ENCODE measurements at regions of chr1 and their contacts with region 1.

Region 1: GRCh38 chr1:221829327-221830015 is 87.6 kb upstream of the DUSP10 start:
- DNase-seq: peak; percentile 79
- ATAC-seq: peak; percentile 96
- H3K4me3 Mint-ChIP-seq: peak overlapping the region; percentile 31
- H3K27ac Mint-ChIP-seq: peak overlapping the region; percentile 86
- H3K4me1 Mint-ChIP-seq: peaks cover 55% of the 10 kb centered on the region
- H3K27me3 Mint-ChIP-seq: no peaks in the 10 kb centered on the region

Region 2: DNA sequence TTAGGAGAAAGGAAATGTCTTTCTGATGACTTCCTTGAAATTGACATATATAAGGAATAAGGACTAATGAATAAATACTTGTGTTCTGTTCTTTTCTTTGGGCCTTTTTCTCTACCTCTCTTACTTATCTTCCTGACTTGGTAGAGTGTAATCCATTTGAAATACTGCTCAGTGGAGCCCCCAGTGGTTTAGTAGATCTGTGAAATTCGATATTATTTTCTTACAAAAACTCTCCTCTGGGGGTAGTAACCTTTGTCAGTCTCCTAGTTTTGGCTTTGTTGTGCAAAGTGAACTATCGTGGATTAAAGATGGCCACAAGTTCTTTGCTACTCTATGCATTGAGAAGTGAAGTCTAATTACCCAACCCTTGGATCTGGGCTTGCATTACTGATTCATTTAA is 136.4 kb before region 1 on chr1:
- CTCF ChIA-PET with region 1: no interaction called
- POLR2A ChIA-PET with region 1: no interaction called
- intact Hi-C with region 1: no loop called
- DNase-seq: no peak
- ATAC-seq: no peak
- H3K4me3 Mint-ChIP-seq: no peak overlapping the region
- H3K27ac Mint-ChIP-seq: no peak overlapping the region
- H3K4me1 Mint-ChIP-seq: peaks cover 6% of the 10 kb centered on the region
- H3K27me3 Mint-ChIP-seq: no peaks in the 10 kb centered on the region

Region 3: GRCh38 chr1:221794079-221794670 is 35.3 kb before region 1 on chr1:
- CTCF ChIA-PET with region 1: no interaction called
- POLR2A ChIA-PET with region 1: interaction called, 5 read pairs
- intact Hi-C with region 1: loop called (anchors 2 kb)
- DNase-seq: peak; percentile 54
- ATAC-seq: peak; percentile 91
- H3K4me3 Mint-ChIP-seq: no peak overlapping the region
- H3K27ac Mint-ChIP-seq: peak overlapping the region; percentile 89
- H3K4me1 Mint-ChIP-seq: peaks cover 34% of the 10 kb centered on the region
- H3K27me3 Mint-ChIP-seq: no peaks in the 10 kb centered on the region

Region 4: GRCh38 chr1:221809031-221810029 is 20.1 kb before region 1 on chr1:
- CTCF ChIA-PET with region 1: interaction called, 4 read pairs
- POLR2A ChIA-PET with region 1: no interaction called
- intact Hi-C with region 1: loop called in 1 of 2 experiments (anchors 2 kb)
- DNase-seq: no peak
- ATAC-seq: peak; percentile 58
- H3K4me3 Mint-ChIP-seq: no peak overlapping the region
- H3K27ac Mint-ChIP-seq: peak overlapping the region; percentile 59
- H3K4me1 Mint-ChIP-seq: peaks cover 34% of the 10 kb centered on the region
- H3K27me3 Mint-ChIP-seq: no peaks in the 10 kb centered on the region

Region 5: GRCh38 chr1:221839796-221840395 is 10.4 kb after region 1 on chr1:
- CTCF ChIA-PET with region 1: interaction called, 6 read pairs
- POLR2A ChIA-PET with region 1: interaction called, 9 read pairs
- intact Hi-C with region 1: loop called in 1 of 2 experiments (anchors 1 kb)
- DNase-seq: peak; percentile 85
- ATAC-seq: peak; percentile 98
- H3K4me3 Mint-ChIP-seq: no peak overlapping the region
- H3K27ac Mint-ChIP-seq: peak overlapping the region; percentile 85
- H3K4me1 Mint-ChIP-seq: peaks cover 38% of the 10 kb centered on the region
- H3K27me3 Mint-ChIP-seq: peaks cover 6% of the 10 kb centered on the region

Region 6: GRCh38 chr1:221994274-221994698 is 164.8 kb after region 1 on chr1:
- CTCF ChIA-PET with region 1: no interaction called
- POLR2A ChIA-PET with region 1: no interaction called
- intact Hi-C with region 1: loop called in 1 of 2 experiments (anchors 2 kb)
- DNase-seq: peak; percentile 50
- ATAC-seq: peak; percentile 81
- H3K4me3 Mint-ChIP-seq: no peak overlapping the region
- H3K27ac Mint-ChIP-seq: peak overlapping the region; percentile 89
- H3K4me1 Mint-ChIP-seq: peaks cover 32% of the 10 kb centered on the region
- H3K27me3 Mint-ChIP-seq: no peaks in the 10 kb centered on the region

Measured in activated CD4-positive, alpha-beta T cell treated with anti-CD3 and anti-CD28 coated beads for 36 hours (primary cell).